Activated T-helper 1 cell treated with anti-CD3 and anti-CD28 coated beads, Interleukin-12 subunit alpha, Interleukin-12 subunit beta, Interleukin-2, Interleukin-4 antibody, amounts not matched to agents 30 ng/mL and 10 ng/mL and 1 ng/mL, durations not matched to agents 14 hours and 24 hours and 36 hours (primary cell): ENCODE measurements at regions of chr5 and their contacts with region 1.

Region 1: DNA sequence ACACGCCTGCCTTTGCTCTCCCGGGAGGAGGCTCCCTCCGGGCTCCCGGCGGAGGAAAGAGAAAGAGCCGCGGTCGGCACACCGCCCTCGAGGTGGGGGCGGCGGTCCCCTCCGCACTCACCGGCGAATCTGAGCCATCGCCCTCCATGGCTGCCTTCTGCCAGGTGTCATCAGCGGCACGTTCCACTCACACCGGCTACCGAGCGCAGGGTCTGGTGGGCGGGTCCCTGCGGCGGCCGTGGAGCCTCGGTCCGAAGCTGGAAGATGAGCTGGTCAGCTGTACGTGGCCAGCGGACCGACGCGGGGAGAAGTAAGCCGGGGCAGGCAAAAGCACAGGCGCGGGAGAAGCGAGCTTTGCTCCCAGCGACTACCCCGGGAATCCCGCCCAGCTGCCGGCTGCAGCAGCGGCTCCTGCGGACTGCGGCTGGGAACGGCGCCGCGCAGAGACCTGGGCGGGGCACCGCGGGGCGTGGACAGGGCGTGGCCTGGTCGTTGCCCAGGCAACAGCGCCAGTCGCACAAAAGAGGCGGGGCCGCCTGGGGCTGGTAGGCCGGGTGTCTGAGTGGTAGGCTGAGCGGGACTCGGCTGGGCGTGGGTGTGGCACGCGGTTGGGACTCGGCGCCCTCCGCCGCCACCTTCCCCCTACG is at the start of gene TRIM36:
- DNase-seq: peak; percentile 90
- H3K4me3 Mint-ChIP-seq: peak within 1 kb of the TSS; percentile 82
- H3K27ac Mint-ChIP-seq: peak within 1 kb of the TSS; percentile 37
- H3K4me1 Mint-ChIP-seq: peaks cover 6% of the 10 kb centered on the region
- H3K27me3 Mint-ChIP-seq: peaks cover 60% of the 10 kb centered on the region
- total RNA-seq, gene TRIM36: not detected in 2 replicates

Region 2: GRCh38 chr5:115098041-115098702 is 71.4 kb before region 1 on chr5:
- intact Hi-C with region 1: loop called (anchors 5 kb)
- DNase-seq: peak; percentile 8
- H3K4me3 Mint-ChIP-seq: no peak overlapping the region
- H3K27ac Mint-ChIP-seq: no peak overlapping the region
- H3K4me1 Mint-ChIP-seq: no peaks in the 10 kb centered on the region
- H3K27me3 Mint-ChIP-seq: peaks cover 7% of the 10 kb centered on the region

Region 3: DNA sequence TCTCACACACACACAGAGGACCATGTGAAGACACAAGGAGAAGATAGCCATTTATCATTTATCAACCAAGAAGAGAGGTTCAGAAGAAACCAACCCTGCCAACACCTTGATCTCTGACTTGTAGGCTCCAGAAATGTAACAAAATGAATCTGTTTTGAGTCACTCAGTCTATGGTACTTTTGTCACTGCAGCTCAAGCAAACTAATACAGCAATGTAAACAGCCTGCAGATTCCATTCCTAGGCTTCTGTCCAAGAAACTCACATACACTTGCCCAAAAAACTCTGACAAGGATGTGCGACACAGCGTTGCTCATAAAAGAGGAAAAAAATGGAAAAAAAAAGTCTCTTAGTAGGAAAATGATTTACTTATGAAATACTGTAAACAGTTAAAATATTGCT is 33.3 kb before region 1 on chr5:
- intact Hi-C with region 1: no loop called
- DNase-seq: no peak
- H3K4me3 Mint-ChIP-seq: no peak overlapping the region
- H3K27ac Mint-ChIP-seq: no peak overlapping the region
- H3K4me1 Mint-ChIP-seq: no peaks in the 10 kb centered on the region
- H3K27me3 Mint-ChIP-seq: peaks cover 11% of the 10 kb centered on the region

Region 4: GRCh38 chr5:115209279-115209678 is 39.7 kb after region 1 on chr5:
- intact Hi-C with region 1: loop called (anchors 1 kb)
- DNase-seq: peak; percentile 59
- H3K4me3 Mint-ChIP-seq: no peak overlapping the region
- H3K27ac Mint-ChIP-seq: peak overlapping the region; percentile 28
- H3K4me1 Mint-ChIP-seq: peaks cover 17% of the 10 kb centered on the region
- H3K27me3 Mint-ChIP-seq: no peaks in the 10 kb centered on the region

Region 5: GRCh38 chr5:115296124-115297022 is 126.8 kb after region 1 on chr5 and contains the start of gene CCDC112:
- intact Hi-C with region 1: loop called (anchors 1 kb)
- DNase-seq: peak; percentile 51
- H3K4me3 Mint-ChIP-seq: peak within 1 kb of the TSS; percentile 77
- H3K27ac Mint-ChIP-seq: no peak within 1 kb of the TSS
- H3K4me1 Mint-ChIP-seq: peaks cover 9% of the 10 kb centered on the region
- H3K27me3 Mint-ChIP-seq: peaks cover 53% of the 10 kb centered on the region
- total RNA-seq, gene CCDC112: 0.22 and 0.29 TPM in 2 replicates

Region 6: GRCh38 chr5:116084871-116085715 is 915.5 kb after region 1 on chr5 and contains the start of gene COMMD10:
- intact Hi-C with region 1: loop called (anchors 10 kb)
- DNase-seq: peak; percentile 72
- H3K4me3 Mint-ChIP-seq: peak within 1 kb of the TSS; percentile 89
- H3K27ac Mint-ChIP-seq: peak within 1 kb of the TSS; percentile 86
- H3K4me1 Mint-ChIP-seq: peaks cover 30% of the 10 kb centered on the region
- H3K27me3 Mint-ChIP-seq: peaks cover 4% of the 10 kb centered on the region
- total RNA-seq, gene COMMD10: 21.8 and 23.6 TPM in 2 replicates